Naive thymus-derived CD4-positive, alpha-beta T cell (primary cell): ENCODE measurements at regions of chr1 and their contacts with region 1.

Region 1: GRCh38 chr1:152189657-152190442 is 30.8 kb upstream of the RPTN start:
- DNase-seq: peak; percentile 17 to 65 (median 45)
- ATAC-seq: peak; percentile 78
- H3K4me3 ChIP-seq: peak overlapping the region; percentile 63
- H3K4me3 Mint-ChIP-seq: peak overlapping the region; percentile 62 to 88 (median 80)
- H3K27ac ChIP-seq: no peak overlapping the region
- H3K27ac Mint-ChIP-seq: peak overlapping the region in 3 of 9 donors; percentile 4 to 43 (median 26)
- H3K4me1 ChIP-seq: no peaks in the 10 kb centered on the region
- H3K4me1 Mint-ChIP-seq: peaks cover 0 to 9% (median 6%) of the 10 kb centered on the region in 7 donors
- H3K27me3 ChIP-seq: no peaks in the 10 kb centered on the region
- H3K27me3 Mint-ChIP-seq: peaks cover 0 to 45% (median 5%) of the 10 kb centered on the region in 5 donors

Region 2: DNA sequence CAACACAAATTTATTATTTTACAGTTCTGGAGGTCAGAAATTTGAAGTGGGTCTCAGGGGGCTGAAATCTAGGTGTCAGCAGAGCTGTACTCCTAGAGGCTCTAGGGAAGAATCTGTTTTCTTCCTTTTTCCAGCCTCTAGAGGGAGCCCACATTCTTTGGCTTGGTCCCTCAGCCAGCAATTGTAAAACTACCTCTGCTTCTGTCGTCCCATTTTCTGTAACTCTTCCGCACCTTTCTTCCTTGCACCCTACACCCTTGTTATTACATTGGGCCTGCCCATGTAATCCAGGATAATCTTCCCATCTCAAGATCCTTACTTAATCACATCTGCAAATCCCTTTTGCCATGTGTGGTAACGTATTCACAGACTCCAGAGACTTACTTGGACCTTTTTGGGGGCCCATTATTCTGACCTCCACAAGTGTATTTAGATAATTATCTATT is 255.8 kb before region 1 on chr1:
- CTCF ChIA-PET with region 1: no interaction called
- POLR2A ChIA-PET with region 1: no interaction called
- intact Hi-C with region 1: loop called in 1 of 2 experiments (anchors 10 kb)
- DNase-seq: peak in 7 of 9 donors; percentile 31 to 69 (median 59)
- ATAC-seq: peak; percentile 94
- H3K4me3 ChIP-seq: no peak overlapping the region
- H3K4me3 Mint-ChIP-seq: peak overlapping the region in 1 of 10 donors; percentile 49
- H3K27ac ChIP-seq: no peak overlapping the region
- H3K27ac Mint-ChIP-seq: peak overlapping the region in 1 of 9 donors; percentile 41
- H3K4me1 ChIP-seq: no peaks in the 10 kb centered on the region
- H3K4me1 Mint-ChIP-seq: peaks cover 0 to 6% (median 4%) of the 10 kb centered on the region in 7 donors
- H3K27me3 ChIP-seq: no peaks in the 10 kb centered on the region
- H3K27me3 Mint-ChIP-seq: peaks cover 0 to 33% (median 0%) of the 10 kb centered on the region in 5 donors

Region 3: DNA sequence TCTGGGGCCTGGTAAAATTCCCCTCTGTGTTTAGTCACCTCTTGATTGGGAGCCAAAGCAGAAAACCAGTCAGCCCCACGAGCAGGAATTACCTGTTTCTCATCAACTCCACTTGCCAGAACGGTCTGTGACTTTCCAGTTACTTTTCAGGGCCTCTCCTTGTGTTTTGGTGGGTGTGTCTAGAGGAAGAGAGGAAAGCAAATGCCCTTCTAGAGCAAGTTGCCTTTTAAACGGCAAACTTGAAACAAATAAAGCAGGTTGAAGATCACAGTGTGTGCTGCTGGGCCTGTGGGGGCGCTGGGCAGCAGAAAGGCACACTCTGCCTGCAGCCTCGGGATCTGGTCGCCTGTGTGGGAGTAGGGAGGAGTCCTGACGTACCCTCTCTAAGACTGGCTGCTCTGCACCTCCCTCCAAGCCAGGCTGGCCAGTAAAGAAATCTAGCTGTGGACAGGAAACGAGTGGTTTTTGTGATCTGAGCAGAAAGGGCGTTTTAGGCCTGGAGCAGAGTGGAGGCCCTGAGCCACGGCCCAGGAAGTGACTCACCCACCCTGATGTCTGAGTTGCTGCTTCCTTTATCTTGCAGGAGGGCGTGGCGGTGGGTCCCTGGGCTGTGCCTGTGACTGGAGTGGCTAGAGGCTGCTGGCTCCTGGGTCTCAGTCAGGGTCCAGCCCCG is 142.0 kb before region 1 on chr1:
- CTCF ChIA-PET with region 1: interaction called, 97 read pairs
- POLR2A ChIA-PET with region 1: interaction called, 4 read pairs
- intact Hi-C with region 1: loop called (anchors 1 kb)
- DNase-seq: peak; percentile 57 to 82 (median 76)
- ATAC-seq: peak; percentile 93
- H3K4me3 ChIP-seq: peak overlapping the region; percentile 10
- H3K4me3 Mint-ChIP-seq: peak overlapping the region; percentile 56 to 87 (median 77)
- H3K27ac ChIP-seq: peak overlapping the region; percentile 81
- H3K27ac Mint-ChIP-seq: peak overlapping the region; percentile 92 to 98 (median 98)
- H3K4me1 ChIP-seq: peaks cover 19 to 21% of the 10 kb centered on the region in 2 donors
- H3K4me1 Mint-ChIP-seq: peaks cover 21 to 53% (median 30%) of the 10 kb centered on the region in 7 donors
- H3K27me3 ChIP-seq: no peaks in the 10 kb centered on the region
- H3K27me3 Mint-ChIP-seq: peaks cover 0 to 3% (median 0%) of the 10 kb centered on the region in 5 donors

Region 4: DNA sequence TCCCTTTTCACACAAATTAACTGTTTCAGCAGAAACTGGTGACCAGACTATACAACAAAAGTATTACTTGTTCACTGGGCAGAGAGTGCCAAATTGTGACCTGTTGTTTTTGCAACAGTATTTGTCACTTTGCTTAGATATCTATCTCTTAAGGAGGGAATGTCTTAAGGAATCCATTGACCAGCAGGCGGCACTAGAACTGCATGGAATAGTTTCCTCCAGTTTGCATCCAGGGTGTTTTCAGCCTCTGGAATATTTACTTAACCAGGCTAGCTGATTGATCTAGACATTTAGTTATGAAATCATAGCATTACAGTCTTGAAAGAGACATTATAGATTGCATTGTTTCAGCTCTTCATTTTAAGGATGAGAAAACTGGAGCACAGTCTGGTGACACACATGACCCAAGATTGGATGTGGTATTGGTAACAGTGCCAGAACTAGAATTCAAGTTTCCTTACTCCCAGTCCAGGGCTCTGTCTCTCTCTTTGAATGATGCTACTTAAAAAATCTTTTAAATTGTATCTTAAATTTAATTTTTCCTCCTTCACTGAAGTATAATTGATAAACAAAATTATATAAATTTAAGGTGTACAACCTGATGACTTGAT is 47.8 kb before region 1 on chr1:
- CTCF ChIA-PET with region 1: no interaction called
- POLR2A ChIA-PET with region 1: no interaction called
- intact Hi-C with region 1: loop called in 1 of 2 experiments (anchors 1 kb)
- DNase-seq: no peak
- ATAC-seq: no peak
- H3K4me3 ChIP-seq: no peak overlapping the region
- H3K4me3 Mint-ChIP-seq: no peak overlapping the region
- H3K27ac ChIP-seq: no peak overlapping the region
- H3K27ac Mint-ChIP-seq: no peak overlapping the region
- H3K4me1 ChIP-seq: no peaks in the 10 kb centered on the region
- H3K4me1 Mint-ChIP-seq: no peaks in the 10 kb centered on the region
- H3K27me3 ChIP-seq: no peaks in the 10 kb centered on the region
- H3K27me3 Mint-ChIP-seq: peaks cover 37 to 54% (median 47%) of the 10 kb centered on the region in 5 donors

Region 5: GRCh38 chr1:152347116-152347728 is 157.4 kb after region 1 on chr1:
- CTCF ChIA-PET with region 1: no interaction called
- POLR2A ChIA-PET with region 1: no interaction called
- intact Hi-C with region 1: loop called (anchors 1 kb)
- DNase-seq: peak in 6 of 9 donors; percentile 20 to 59 (median 48)
- ATAC-seq: peak; percentile 57
- H3K4me3 ChIP-seq: no peak overlapping the region
- H3K4me3 Mint-ChIP-seq: no peak overlapping the region
- H3K27ac ChIP-seq: no peak overlapping the region
- H3K27ac Mint-ChIP-seq: no peak overlapping the region
- H3K4me1 ChIP-seq: no peaks in the 10 kb centered on the region
- H3K4me1 Mint-ChIP-seq: no peaks in the 10 kb centered on the region
- H3K27me3 ChIP-seq: peaks cover 0 to 6% of the 10 kb centered on the region in 2 donors
- H3K27me3 Mint-ChIP-seq: peaks cover 19 to 35% (median 22%) of the 10 kb centered on the region in 5 donors

Region 6: DNA sequence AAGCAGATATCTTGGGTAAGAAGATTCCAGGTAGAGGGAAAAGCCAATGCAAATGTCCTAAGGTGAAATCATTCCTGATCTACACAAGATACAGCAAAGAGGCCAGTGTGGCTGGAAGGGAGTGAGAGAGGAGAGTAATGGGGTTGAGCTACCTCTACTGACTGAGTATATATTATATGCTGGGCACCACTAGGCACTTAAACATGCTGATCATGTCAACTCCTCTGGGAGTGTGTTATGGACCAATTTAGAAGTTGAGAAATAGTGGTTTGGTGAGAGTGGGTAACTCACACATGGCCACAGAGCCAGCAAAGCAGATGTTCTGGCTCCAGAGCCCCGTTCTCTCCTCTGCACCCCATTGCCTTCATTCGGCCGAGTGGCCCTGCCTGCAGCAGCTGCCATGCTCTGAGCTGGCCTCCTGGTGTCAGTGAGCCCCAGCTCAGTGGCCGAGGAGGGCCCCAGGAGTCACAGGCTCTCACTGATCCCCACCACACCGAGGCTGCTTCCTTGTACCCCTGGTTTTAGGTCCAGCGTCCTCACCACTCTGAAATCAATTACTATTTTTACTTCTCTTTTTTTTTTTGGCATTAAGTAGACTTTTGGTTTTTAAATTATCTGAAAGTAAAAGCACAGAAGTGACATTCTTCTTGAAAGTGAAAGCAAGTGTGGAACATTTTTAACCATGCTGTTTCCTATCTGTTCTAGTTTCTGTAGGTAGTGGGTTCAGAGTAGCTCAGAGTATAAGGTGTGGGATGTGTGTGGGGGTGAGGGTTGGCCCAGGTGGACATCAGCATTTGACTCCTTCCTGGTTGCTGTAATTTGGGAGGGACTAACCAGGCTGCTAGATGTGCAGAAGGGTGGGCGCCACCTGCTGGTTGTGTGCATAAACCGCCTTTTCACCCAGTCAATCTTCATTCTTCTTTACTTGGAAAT is 270.0 kb after region 1 on chr1:
- CTCF ChIA-PET with region 1: interaction called, 27 read pairs
- POLR2A ChIA-PET with region 1: no interaction called
- intact Hi-C with region 1: loop called (anchors 1 kb)
- DNase-seq: peak; percentile 34 to 74 (median 63)
- ATAC-seq: peak; percentile 83
- H3K4me3 ChIP-seq: peak overlapping the region; percentile 39
- H3K4me3 Mint-ChIP-seq: peak overlapping the region; percentile 61 to 85 (median 74)
- H3K27ac ChIP-seq: peak overlapping the region; percentile 12
- H3K27ac Mint-ChIP-seq: peak overlapping the region; percentile 63 to 93 (median 86)
- H3K4me1 ChIP-seq: peaks cover 5 to 10% of the 10 kb centered on the region in 2 donors
- H3K4me1 Mint-ChIP-seq: peaks cover 22 to 30% (median 27%) of the 10 kb centered on the region in 7 donors
- H3K27me3 ChIP-seq: no peaks in the 10 kb centered on the region
- H3K27me3 Mint-ChIP-seq: peaks cover 0 to 9% (median 0%) of the 10 kb centered on the region in 5 donors